Activated CD8-positive, alpha-beta memory T cell treated with anti-CD3 and anti-CD28 coated beads, Interleukin-2, amount 10 ng/mL, durations not matched to agents 7 days and 5 days (primary cell): ENCODE measurements at regions of chr19 and their contacts with region 1.

Region 1: GRCh38 chr19:47210689-47211316 is 20.2 kb downstream of the BBC3 start:
- DNase-seq: peak; percentile 90
- ATAC-seq: peak; percentile 85
- H3K4me3 Mint-ChIP-seq: no peak overlapping the region
- H3K27ac Mint-ChIP-seq: peak overlapping the region; percentile 92
- H3K4me1 Mint-ChIP-seq: peaks cover 11% of the 10 kb centered on the region
- H3K27me3 Mint-ChIP-seq: no peaks in the 10 kb centered on the region

Region 2: GRCh38 chr19:47120470-47121067 is 90.2 kb before region 1 on chr19:
- CTCF ChIA-PET with region 1: no interaction called
- DNase-seq: no peak
- ATAC-seq: no peak
- H3K4me3 Mint-ChIP-seq: no peak overlapping the region
- H3K27ac Mint-ChIP-seq: no peak overlapping the region
- H3K4me1 Mint-ChIP-seq: peaks cover 4% of the 10 kb centered on the region
- H3K27me3 Mint-ChIP-seq: no peaks in the 10 kb centered on the region

Region 3: GRCh38 chr19:47145639-47146486 is 64.9 kb before region 1 on chr19:
- CTCF ChIA-PET with region 1: interaction called, 35 read pairs
- DNase-seq: no peak
- ATAC-seq: peak; percentile 61
- H3K4me3 Mint-ChIP-seq: no peak overlapping the region
- H3K27ac Mint-ChIP-seq: peak overlapping the region; percentile 55
- H3K4me1 Mint-ChIP-seq: peaks cover 46% of the 10 kb centered on the region
- H3K27me3 Mint-ChIP-seq: no peaks in the 10 kb centered on the region

Region 4: DNA sequence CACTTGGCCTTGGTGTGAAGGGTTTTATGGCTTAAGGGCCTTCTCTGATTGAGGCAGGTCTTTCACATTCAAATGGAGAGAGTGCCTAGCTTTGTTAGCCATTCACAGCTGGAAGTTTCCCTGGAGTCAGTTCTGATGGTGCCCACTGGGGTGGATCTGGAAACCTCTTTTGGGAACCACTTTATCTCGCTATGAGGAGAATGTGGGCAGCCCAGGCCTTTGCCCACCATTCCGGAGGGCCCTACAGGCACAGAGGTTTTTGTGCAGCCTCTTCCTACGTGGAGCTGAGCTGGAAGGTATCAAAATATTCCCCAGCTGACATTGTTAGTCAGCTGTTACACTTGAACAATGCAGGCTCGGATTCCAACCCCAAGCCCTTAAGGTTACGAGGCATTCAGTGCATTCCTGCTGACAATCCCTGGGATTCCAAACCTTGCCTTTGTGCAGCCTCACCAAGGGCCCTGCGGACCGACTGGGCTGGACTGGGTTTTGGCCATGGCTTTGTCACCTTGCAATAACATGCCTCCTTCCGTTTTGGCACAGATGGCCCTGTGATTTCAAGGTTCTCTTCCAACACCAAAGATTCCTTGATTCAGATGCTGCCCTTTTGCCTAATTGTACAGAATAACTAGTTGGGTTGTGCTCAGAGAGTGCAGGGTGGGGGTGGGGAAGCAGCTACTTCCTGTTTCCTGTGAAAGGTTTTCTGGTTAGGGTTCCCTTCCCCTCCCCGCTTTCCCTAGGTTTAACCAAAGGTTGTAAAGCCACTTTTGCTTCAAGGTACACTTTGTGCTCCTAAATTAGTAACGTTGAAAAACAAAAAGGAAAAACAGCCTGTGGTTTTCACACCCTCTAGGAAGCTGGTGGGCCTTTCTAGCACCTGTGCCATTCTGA is 53.1 kb before region 1 on chr19:
- CTCF ChIA-PET with region 1: interaction called, 28 read pairs
- DNase-seq: peak; percentile 51
- ATAC-seq: peak; percentile 46
- H3K4me3 Mint-ChIP-seq: peak overlapping the region; percentile 10
- H3K27ac Mint-ChIP-seq: peak overlapping the region; percentile 73
- H3K4me1 Mint-ChIP-seq: peaks cover 44% of the 10 kb centered on the region
- H3K27me3 Mint-ChIP-seq: no peaks in the 10 kb centered on the region

Region 5: GRCh38 chr19:47195434-47195833 is 15.4 kb before region 1 on chr19:
- CTCF ChIA-PET with region 1: interaction called, 44 read pairs
- DNase-seq: no peak
- ATAC-seq: no peak
- H3K4me3 Mint-ChIP-seq: no peak overlapping the region
- H3K27ac Mint-ChIP-seq: no peak overlapping the region
- H3K4me1 Mint-ChIP-seq: peaks cover 7% of the 10 kb centered on the region
- H3K27me3 Mint-ChIP-seq: no peaks in the 10 kb centered on the region

Region 6: DNA sequence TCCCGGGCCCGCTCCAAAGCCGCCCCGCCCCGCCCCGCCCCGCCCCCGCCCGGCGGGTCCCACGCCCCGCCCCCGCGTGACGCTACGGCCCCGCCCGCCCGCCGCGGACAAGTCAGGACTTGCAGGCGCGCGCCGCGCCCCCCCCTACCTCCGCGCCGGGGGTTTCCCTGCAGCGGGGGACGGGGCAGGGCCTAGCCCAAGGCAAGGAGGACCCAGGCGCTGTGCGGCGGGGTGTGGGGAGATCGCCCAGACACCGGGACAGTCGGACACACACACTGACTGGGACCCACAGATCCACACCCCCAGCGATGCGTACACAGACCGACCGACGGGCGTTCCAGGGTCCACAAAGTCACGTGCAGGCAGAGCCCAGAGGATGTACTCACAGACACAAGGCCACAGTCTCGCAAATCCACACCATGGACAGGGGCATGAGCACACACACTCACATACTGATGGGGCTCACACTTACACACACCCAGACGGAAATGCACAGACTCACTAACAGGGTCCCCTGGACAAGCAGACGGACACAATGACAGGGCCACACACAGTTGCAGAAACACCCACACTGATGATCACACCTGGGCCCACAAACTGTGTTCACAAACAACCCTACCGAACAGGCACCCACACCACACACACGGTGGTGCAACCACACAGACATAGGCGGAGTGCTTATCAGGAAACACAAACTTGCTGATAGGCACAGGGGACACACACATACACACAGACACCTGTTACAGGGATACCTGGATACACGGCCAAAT is 20.6 kb after region 1 on chr19:
- CTCF ChIA-PET with region 1: interaction called, 108 read pairs
- DNase-seq: peak; percentile 94
- ATAC-seq: peak; percentile 60
- H3K4me3 Mint-ChIP-seq: peak overlapping the region; percentile 71
- H3K27ac Mint-ChIP-seq: peak overlapping the region; percentile 80
- H3K4me1 Mint-ChIP-seq: peaks cover 27% of the 10 kb centered on the region
- H3K27me3 Mint-ChIP-seq: peaks cover 8% of the 10 kb centered on the region

Region 7: DNA sequence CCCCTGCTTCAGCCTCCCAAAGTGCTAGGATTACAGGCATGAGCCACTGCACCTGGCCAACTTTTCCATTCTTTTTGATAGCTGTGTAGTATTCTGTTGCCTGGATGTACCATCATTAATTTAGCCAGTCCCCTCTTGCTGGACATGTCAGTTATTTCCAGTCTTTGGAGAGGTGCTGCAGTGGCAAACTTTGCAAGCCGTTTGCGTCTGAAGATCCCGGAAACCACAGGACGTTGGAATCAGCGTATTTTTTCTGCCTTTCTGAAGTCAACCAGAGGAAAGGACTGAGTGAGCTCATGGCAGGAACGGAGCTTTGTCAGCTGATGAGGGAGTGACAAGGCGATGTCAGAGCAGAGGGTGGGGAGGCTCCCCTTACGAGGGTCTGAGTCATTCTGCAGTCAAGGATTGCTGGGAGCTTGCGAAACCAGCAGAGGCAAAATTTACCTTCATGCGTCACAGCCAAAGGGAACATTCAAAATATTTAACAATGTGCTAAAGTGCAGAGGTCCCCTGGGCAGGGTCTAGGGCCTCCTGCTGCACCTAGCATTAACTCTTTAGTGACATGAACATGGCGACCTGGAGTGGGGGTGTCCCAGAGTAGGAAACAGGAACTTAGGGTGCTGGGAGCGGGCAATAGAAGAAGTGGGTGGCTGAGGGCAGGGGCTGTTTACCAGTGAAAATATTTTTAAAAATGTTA is 104.5 kb after region 1 on chr19:
- CTCF ChIA-PET with region 1: no interaction called
- DNase-seq: no peak
- ATAC-seq: no peak
- H3K4me3 Mint-ChIP-seq: no peak overlapping the region
- H3K27ac Mint-ChIP-seq: no peak overlapping the region
- H3K4me1 Mint-ChIP-seq: no peaks in the 10 kb centered on the region
- H3K27me3 Mint-ChIP-seq: peaks cover 6% of the 10 kb centered on the region